MCF 10A (cell line): ENCODE measurements at regions of chr13 and their contacts with region 1.

Region 1: DNA sequence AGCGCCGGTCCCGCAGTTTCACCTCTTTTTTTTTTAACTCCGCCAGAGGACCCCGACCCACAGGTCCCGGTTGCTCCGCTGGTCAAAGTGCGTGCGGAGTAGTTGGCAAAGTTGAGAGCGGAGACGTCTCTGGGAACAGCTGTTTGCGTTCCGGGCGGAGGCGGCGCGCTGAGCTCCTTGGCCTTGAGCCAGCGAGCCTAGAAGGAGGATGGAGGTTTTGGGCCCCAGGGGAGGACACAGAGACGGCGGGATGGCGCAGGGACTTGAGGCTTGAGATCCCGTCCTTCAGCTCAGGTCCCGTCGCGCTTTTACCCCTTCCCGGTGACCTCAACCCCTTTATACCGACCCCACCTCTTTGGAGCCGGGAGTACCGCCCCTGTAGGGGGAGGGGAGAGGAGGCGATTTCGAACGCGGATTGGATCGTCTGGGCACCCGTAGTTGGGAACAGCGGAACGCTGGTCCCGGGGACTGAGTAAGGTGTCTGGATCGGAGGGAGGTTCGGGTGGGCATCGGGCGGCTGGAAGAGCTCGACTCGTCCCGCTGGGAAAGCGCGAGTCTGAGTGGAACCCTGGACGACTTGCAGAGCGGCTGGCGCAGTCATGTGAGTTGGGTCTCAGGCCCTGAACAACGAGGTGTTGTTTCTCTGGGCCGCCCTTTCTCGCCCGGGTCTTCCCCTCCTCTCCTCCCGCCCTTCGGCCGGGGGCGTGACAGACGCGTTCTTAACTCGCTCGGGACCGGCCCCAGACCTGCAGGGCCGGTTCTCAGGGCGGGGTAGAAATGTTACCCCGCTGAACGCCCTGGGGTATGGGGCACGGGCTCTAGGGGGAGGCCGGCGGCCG is at the start of gene WBP4:
- DNase-seq: peak; percentile 97
- H3K4me3 Mint-ChIP-seq: peak within 1 kb of the TSS; percentile 99
- H3K27ac Mint-ChIP-seq: peak within 1 kb of the TSS; percentile 99
- H3K4me1 Mint-ChIP-seq: peaks cover 25% of the 10 kb centered on the region
- H3K27me3 Mint-ChIP-seq: no peaks in the 10 kb centered on the region
- CTCF ChIP-seq: no peak
- total RNA-seq, gene WBP4: 14.7 and 16.0 TPM in 2 replicates

Region 2: GRCh38 chr13:40789275-40790133 is 271.8 kb before region 1 on chr13 and contains the start of gene SLC25A15:
- CTCF ChIA-PET with region 1: interaction called, 3 read pairs
- POLR2A ChIA-PET with region 1: interaction called, 10 read pairs
- intact Hi-C with region 1: loop called (anchors 5 kb)
- DNase-seq: peak; percentile 84
- H3K4me3 Mint-ChIP-seq: peak within 1 kb of the TSS; percentile 75
- H3K27ac Mint-ChIP-seq: no peak within 1 kb of the TSS
- H3K4me1 Mint-ChIP-seq: no peaks in the 10 kb centered on the region
- H3K27me3 Mint-ChIP-seq: no peaks in the 10 kb centered on the region
- CTCF ChIP-seq: peak; percentile 10
- total RNA-seq, gene SLC25A15: 14.3 and 15.5 TPM in 2 replicates

Region 3: DNA sequence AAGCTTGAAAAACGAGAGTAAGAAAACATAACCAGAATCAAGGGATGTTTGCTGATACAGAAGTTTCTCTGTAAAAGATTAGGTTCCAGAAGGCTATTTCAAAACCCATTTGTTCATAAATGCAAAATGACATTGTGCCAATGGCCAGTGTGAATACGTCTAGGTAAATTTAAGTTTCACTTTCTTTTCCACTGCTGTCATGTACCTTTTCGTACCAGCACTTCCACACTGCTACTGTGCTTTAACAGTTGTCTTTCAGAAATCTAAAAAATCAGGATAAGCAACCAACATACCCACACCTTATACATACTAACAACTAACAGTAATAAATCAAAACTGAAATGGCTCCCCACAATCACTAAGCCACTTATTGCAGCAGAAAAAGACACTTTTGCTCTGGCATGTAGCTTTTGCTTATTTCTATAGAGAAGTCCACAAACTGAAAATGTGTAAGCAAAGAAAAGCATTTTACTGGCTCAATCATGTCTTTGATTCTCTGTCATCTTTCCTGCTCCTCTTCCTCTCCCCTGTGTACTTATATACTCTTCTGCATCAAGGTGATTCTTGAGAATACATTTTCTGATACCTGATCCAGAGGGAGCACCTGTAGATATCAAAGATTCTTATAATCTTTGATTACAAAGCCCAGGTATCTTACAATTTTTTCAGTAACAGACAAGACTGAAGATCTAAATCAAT is 76.5 kb before region 1 on chr13:
- CTCF ChIA-PET with region 1: no interaction called
- POLR2A ChIA-PET with region 1: interaction called, 19 read pairs
- intact Hi-C with region 1: no loop called
- DNase-seq: peak; percentile 34
- H3K4me3 Mint-ChIP-seq: peak overlapping the region; percentile 72
- H3K27ac Mint-ChIP-seq: peak overlapping the region; percentile 40
- H3K4me1 Mint-ChIP-seq: peaks cover 42% of the 10 kb centered on the region
- H3K27me3 Mint-ChIP-seq: no peaks in the 10 kb centered on the region
- CTCF ChIP-seq: no peak

Region 4: GRCh38 chr13:41008349-41008980 is 52.8 kb before region 1 on chr13:
- CTCF ChIA-PET with region 1: no interaction called
- POLR2A ChIA-PET with region 1: interaction called, 283 read pairs
- intact Hi-C with region 1: no loop called
- DNase-seq: peak; percentile 85
- H3K4me3 Mint-ChIP-seq: peak overlapping the region; percentile 13
- H3K27ac Mint-ChIP-seq: peak overlapping the region; percentile 26
- H3K4me1 Mint-ChIP-seq: peaks cover 41% of the 10 kb centered on the region
- H3K27me3 Mint-ChIP-seq: no peaks in the 10 kb centered on the region
- CTCF ChIP-seq: no peak

Region 5: GRCh38 chr13:41132512-41133152 is 71.3 kb after region 1 on chr13 and contains the start of gene KBTBD6:
- CTCF ChIA-PET with region 1: no interaction called
- POLR2A ChIA-PET with region 1: interaction called, 53 read pairs
- intact Hi-C with region 1: loop called (anchors 2 kb)
- DNase-seq: peak; percentile 99
- H3K4me3 Mint-ChIP-seq: peak within 1 kb of the TSS; percentile 96
- H3K27ac Mint-ChIP-seq: peak within 1 kb of the TSS; percentile 96
- H3K4me1 Mint-ChIP-seq: peaks cover 41% of the 10 kb centered on the region
- H3K27me3 Mint-ChIP-seq: no peaks in the 10 kb centered on the region
- CTCF ChIP-seq: no peak
- total RNA-seq, gene KBTBD6: 8.1 and 8.2 TPM in 2 replicates

Region 6: DNA sequence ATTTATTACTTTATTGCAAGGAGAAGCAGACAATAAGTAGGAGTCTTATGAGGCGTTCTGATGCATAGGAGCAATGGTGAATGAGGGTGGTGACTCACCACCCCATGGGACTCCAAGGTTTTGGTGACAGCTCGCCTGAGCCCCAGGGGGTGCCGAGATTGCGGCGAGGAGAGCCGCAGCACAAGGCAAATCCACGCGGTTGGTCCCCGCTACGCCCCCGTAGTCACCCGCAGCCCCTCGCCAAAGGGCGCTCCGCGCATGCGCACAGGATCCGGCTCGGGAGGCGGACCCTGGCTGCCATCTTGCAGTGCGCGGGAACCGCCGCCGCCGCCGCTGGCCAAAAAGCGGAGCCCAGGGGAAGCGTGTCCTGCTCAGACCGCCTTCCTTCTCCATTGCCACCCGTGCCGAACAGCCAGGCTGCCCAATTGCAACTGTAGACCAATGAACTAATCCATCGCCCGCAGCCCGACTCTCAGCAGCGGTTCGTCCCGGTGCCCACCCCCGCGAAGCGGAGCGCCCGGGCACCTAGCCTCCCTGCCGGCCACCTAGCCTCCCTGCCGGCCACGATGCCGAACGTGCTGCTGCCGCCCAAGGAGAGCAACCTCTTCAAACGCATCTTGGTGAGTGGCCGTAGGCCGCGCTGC is 249.8 kb after region 1 on chr13 and contains the start of gene NAA16:
- CTCF ChIA-PET with region 1: no interaction called
- POLR2A ChIA-PET with region 1: interaction called, 17 read pairs
- intact Hi-C with region 1: loop called (anchors 10 kb)
- DNase-seq: peak; percentile 86
- H3K4me3 Mint-ChIP-seq: peak within 1 kb of the TSS; percentile 93
- H3K27ac Mint-ChIP-seq: peak within 1 kb of the TSS; percentile 86
- H3K4me1 Mint-ChIP-seq: peaks cover 13% of the 10 kb centered on the region
- H3K27me3 Mint-ChIP-seq: no peaks in the 10 kb centered on the region
- CTCF ChIP-seq: no peak
- total RNA-seq, gene NAA16: 13.8 and 14.2 TPM in 2 replicates